Endothelial cell of umbilical vein (primary cell): ENCODE measurements at regions of chr3 and their contacts with region 1.

Region 1: DNA sequence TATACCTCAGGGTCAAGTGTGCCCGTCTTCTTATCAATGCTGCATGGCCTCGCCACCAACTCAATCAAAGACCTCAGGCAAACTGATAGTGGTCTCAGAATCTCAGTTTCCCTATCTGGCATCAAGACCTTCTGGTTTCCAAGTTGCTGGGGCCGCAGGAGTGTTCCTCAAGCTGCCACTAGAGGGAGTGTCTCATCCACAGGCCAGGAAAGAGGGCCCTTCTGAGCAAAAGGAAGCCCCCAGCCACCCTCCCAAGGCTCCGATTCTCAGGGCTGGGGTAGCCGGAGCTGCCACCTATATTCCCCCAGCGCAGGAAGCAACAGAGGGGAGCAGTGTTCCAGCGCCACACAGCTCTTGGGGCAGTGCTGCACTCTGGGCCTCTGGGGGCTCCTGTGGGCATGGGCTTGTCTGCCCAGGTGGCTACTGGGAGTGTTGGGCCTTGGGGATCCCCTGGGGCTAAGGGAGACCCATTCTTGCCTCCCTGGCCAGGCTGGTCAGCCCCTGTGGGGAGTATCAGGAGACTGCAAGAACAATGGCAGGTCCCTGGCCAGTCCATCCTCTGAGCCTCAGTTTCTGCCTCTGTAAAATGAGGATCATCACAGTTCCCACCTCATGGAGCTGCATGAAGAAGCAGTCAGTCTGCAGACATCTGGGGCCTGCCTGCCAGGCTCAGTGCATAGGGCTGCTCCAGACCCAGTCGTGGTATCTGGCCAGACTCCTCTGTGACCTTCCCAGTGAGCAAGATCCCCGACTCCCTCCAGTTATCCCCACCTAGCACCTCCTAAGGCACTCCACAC is 23.4 kb upstream of the SEC13 start:
- DNase-seq: peak; percentile 43
- H3K4me3 ChIP-seq: no peak overlapping the region
- H3K27ac ChIP-seq: no peak overlapping the region
- H3K4me1 ChIP-seq: no peaks in the 10 kb centered on the region
- H3K27me3 ChIP-seq: no peaks in the 10 kb centered on the region
- CTCF ChIP-seq: peak; percentile 89 to 94
- POLR2A ChIP-seq: no peak

Region 2: DNA sequence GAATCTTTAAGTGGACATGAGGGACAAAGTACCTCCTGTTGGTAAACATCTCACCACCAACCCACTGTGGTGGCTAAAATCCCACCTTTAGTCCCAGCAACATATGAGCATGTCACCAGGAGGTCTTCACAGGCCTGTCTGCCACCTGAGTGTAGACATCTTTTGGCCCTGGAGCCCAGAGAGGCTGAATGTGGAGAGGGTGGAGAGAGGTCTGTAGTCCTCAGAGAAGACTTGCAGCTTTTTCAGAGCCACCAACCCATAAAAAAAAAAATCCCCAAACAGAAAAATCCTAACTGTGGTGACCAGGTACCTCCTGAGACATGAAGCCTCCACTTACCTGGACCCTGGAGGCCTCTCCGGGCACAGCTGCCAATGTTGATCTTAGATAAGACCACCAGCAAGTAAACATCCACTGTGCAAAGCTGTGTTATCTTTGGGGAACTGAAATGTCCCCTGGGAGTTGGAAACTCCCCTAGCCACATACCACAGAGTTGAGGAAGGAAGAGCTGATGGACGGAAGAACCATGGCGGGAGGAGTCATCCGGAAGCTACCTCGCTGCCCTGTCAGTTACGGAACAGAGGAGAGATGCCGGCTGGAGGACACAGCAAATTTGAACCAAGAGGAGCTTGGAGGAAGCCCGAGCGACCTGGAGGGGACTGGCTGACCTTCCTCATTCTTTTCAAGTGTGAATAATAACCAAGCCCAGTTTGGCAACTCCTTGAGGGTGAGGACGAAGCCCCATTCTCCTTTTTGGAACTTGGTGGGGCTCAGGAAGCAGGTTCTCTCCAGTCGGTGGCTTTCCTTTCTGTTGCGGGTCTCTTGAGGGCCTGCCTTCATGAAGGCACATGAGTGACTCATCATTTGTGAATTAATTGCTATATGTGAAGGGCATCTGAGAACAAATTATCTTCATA is 51.6 kb before region 1 on chr3 and contains the start of gene GHRL:
- CTCF ChIA-PET with region 1: no interaction called
- POLR2A ChIA-PET with region 1: no interaction called
- dilution Hi-C with region 1: no loop called
- intact Hi-C with region 1: no loop called
- DNase-seq: no peak
- H3K4me3 ChIP-seq: no peak within 1 kb of the TSS
- H3K27ac ChIP-seq: no peak within 1 kb of the TSS
- H3K4me1 ChIP-seq: no peaks in the 10 kb centered on the region
- H3K27me3 ChIP-seq: no peaks in the 10 kb centered on the region
- CTCF ChIP-seq: no peak
- POLR2A ChIP-seq: no peak
- total RNA-seq, gene GHRL: not detected in 2 replicates

Region 3: GRCh38 chr3:10357592-10358308 is 13.4 kb after region 1 on chr3:
- CTCF ChIA-PET with region 1: interaction called, 11 read pairs
- POLR2A ChIA-PET with region 1: no interaction called
- dilution Hi-C with region 1: no loop called
- intact Hi-C with region 1: no loop called
- DNase-seq: no peak
- H3K4me3 ChIP-seq: no peak overlapping the region
- H3K27ac ChIP-seq: no peak overlapping the region
- H3K4me1 ChIP-seq: peaks cover 22% of the 10 kb centered on the region
- H3K27me3 ChIP-seq: no peaks in the 10 kb centered on the region
- CTCF ChIP-seq: no peak
- POLR2A ChIP-seq: no peak

Region 4: GRCh38 chr3:10738688-10739372 is 394.5 kb after region 1 on chr3:
- CTCF ChIA-PET with region 1: interaction called, 84 read pairs
- POLR2A ChIA-PET with region 1: no interaction called
- dilution Hi-C with region 1: no loop called
- intact Hi-C with region 1: loop called (anchors 1 kb)
- DNase-seq: peak; percentile 70
- H3K4me3 ChIP-seq: peak overlapping the region in 1 of 3 experiments; percentile 18
- H3K27ac ChIP-seq: no peak overlapping the region
- H3K4me1 ChIP-seq: no peaks in the 10 kb centered on the region
- H3K27me3 ChIP-seq: peaks cover 0 to 5% of the 10 kb centered on the region in 2 experiments
- CTCF ChIP-seq: peak; percentile 75 to 89
- POLR2A ChIP-seq: no peak